ENCODE measurements at regions of chr12 and their contacts with region 1.

Region 1: GRCh38 chr12:30806989-30807694 is 52.4 kb upstream of the CAPRIN2 start:
- DNase-seq: peak; percentile 30 to 50
- H3K4me3 ChIP-seq: no peak overlapping the region
- H3K27ac ChIP-seq: no peak overlapping the region
- H3K4me1 ChIP-seq: peaks cover 13% of the 10 kb centered on the region
- H3K27me3 ChIP-seq: no peaks in the 10 kb centered on the region
- CTCF ChIP-seq: peak; percentile 85

Region 2: DNA sequence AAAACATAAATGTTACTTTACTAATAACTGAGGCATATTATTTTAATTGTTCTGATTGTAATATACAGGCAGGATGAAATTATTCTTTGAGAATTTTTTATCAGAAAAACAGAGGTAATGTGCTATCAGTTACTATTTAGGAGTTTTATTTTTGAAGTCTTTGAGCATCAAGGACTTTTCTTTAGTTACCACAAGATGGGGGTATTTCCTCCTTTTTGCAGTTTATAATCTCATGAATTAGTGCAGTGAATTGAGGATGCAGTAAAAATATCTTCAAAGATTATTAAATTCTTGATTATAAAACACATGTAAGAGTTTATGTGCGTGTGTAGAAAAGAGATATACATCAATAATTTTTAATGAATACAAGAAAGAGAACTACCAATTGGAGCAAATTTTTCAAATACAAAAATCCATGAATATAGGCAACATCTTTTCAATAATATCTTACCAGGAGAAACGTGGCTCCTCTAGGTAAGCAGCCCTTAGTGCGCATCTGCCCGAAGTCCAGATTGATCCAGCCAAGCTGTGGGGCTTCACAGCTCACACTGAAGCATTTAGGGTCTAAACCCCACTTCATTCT is 1497.7 kb before region 1 on chr12:
- CTCF ChIA-PET with region 1: no interaction called
- POLR2A ChIA-PET with region 1: no interaction called
- intact Hi-C with region 1: loop called (anchors 5 kb)
- DNase-seq: no peak
- H3K4me3 ChIP-seq: no peak overlapping the region
- H3K27ac ChIP-seq: no peak overlapping the region
- H3K4me1 ChIP-seq: no peaks in the 10 kb centered on the region
- H3K27me3 ChIP-seq: no peaks in the 10 kb centered on the region
- CTCF ChIP-seq: peak; percentile 67

Region 3: GRCh38 chr12:29365091-29365490 is 1442.1 kb before region 1 on chr12:
- CTCF ChIA-PET with region 1: no interaction called
- POLR2A ChIA-PET with region 1: interaction called, 21 read pairs
- intact Hi-C with region 1: no loop called
- DNase-seq: no peak
- H3K4me3 ChIP-seq: no peak overlapping the region
- H3K27ac ChIP-seq: no peak overlapping the region
- H3K4me1 ChIP-seq: no peaks in the 10 kb centered on the region
- H3K27me3 ChIP-seq: no peaks in the 10 kb centered on the region
- CTCF ChIP-seq: no peak

Region 4: DNA sequence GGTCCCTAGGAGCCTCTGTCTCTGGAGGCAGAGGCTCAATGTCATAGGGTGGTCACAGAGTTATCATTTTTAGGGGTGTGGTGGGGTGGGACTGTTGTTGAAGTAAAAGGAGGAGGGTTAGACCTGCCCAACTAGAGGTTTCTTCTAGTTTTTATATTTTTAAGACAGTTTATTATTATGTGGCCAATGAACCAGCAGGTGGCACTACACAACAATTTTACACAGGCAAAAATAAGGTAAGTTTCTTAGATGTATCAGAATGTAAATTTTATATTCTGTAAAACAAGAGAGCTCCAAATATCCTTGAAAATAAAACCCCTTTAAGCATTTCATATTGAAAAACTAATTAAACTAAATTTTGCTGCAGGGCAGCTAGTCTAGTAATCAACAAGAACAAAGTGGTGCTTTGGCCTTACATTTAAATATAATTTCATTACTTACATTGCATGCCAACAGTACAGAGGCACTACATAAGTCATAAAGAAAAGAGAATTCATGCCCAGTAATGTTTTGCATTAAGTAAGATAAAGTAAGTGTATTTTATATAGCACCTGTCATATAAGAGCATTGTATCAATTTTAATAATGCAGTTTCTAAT is 1287.5 kb before region 1 on chr12:
- CTCF ChIA-PET with region 1: interaction called, 6 read pairs
- POLR2A ChIA-PET with region 1: no interaction called
- intact Hi-C with region 1: loop called (anchors 1 kb)
- DNase-seq: peak in 1 of 2 experiments; percentile 24
- H3K4me3 ChIP-seq: no peak overlapping the region
- H3K27ac ChIP-seq: no peak overlapping the region
- H3K4me1 ChIP-seq: no peaks in the 10 kb centered on the region
- H3K27me3 ChIP-seq: no peaks in the 10 kb centered on the region
- CTCF ChIP-seq: peak; percentile 84

Region 5: DNA sequence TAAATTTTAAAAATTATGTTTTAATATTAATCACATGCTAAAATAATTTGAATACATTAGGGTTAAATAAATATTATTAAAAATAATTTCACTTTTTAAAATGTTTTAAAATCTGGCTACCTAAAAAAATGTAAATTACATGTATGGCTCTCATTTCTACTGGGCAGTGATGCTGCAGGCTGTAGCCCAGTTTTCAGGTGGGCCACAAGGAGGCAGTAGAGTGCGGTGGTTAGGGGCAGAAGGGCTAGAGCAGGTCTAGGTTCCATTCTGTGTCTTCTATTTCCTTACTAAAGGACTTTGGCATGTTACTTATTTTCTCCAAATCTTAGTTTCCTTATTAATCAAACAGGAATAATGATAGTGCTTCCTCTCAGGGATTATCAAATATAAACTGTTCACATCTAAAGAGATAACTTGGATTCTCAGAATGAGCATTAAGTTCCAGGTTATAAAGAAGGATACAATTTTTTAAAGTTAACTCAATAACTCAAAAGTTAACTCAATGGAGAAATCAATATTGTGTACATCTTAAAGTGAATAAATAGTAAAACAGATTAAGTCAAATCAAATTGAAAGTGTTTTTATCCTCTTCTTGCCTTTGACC is 1254.7 kb before region 1 on chr12:
- CTCF ChIA-PET with region 1: no interaction called
- POLR2A ChIA-PET with region 1: no interaction called
- intact Hi-C with region 1: loop called (anchors 5 kb)
- DNase-seq: peak; percentile 36 to 60
- H3K4me3 ChIP-seq: no peak overlapping the region
- H3K27ac ChIP-seq: no peak overlapping the region
- H3K4me1 ChIP-seq: no peaks in the 10 kb centered on the region
- H3K27me3 ChIP-seq: no peaks in the 10 kb centered on the region
- CTCF ChIP-seq: peak; percentile 92

Region 6: DNA sequence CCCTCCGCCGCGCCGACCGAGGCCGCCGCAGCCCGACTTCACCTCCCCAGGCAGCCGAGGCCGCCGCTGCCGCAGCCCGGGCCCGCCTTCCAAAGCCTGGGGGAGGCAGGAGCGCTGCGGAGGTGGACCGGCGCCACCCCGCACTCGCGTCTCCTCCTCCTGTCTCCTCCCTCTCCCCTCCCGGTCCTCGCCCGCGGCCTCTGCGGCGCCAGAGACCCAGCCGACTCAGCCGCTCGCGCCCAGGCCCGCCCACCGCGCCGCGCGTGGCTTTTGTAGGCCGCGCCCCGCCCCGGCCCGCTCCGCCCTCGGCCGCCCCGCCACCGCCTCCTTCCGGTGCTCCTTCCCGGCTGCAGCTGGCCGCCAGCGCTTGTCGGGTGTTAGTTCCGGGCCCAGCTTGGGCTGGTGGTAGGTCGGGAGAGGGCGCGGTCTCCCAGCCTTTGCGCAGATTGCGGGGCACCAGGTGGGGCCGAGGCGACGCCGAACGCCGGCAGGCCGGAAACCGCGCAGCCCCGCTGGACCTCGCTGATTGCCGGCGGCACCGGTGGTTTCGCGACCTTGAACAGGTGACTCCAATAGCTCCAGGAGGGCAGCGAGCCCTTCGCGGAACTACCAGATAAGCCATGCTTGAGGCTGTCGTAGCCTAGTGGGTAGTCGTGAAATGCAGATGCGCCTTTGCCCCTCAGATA is 52.3 kb before region 1 on chr12 and contains the start of gene CAPRIN2:
- CTCF ChIA-PET with region 1: interaction called, 7 read pairs
- POLR2A ChIA-PET with region 1: interaction called, 4 read pairs
- intact Hi-C with region 1: loop called (anchors 1 kb)
- DNase-seq: peak; percentile 86 to 100
- H3K4me3 ChIP-seq: peak within 1 kb of the TSS; percentile 74
- H3K27ac ChIP-seq: peak within 1 kb of the TSS; percentile 70
- H3K4me1 ChIP-seq: peaks cover 46% of the 10 kb centered on the region
- H3K27me3 ChIP-seq: no peaks in the 10 kb centered on the region
- CTCF ChIP-seq: peak; percentile 41; the same call in 1 of the 2 replicates
- total RNA-seq, gene CAPRIN2: 27.4 and 29.5 TPM in 2 replicates

Region 7: DNA sequence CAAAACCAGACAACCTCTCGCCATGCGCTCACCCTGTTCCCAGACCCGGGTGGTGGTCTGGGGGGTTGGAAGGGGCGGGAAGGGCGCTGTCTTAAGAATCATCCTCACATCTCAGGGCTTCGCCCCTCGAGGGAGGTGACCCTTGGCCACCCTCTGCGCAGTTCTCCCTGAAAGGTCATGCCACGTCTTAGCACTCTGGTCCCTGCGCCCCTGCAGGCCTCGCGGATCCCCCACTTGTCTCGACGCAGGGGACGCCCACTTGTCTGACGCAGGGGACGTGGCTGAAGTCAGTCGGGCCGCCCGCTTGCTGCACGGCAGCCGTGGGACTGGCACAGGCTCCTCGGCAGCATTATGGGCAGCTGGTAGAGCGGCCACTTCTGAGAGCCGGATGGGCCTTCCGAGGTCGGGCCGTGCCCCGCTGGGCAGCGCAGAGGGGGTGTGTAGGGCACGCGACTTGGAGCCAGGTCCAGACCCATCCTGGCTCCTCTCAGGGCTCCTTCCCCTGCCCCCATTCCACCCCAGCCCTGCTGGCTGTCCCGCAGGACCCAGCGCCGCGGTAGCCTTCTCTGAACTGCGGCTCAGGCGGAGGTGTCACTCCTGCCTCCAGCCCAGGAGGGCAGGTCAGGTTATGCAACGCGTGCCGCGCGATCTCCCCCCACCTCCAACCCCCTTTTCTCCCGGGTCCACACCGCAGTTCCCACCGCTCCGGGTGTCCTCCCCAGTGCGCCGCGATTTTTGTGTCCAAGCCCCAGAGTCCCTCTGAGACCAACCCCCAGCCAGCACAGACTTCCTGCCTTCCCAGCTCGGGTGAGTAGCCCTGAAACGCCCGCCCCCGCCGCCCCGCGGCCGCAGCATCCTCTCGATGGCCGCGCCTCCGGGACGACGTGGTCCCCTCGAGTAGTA is 11.5 kb before region 1 on chr12:
- CTCF ChIA-PET with region 1: interaction called, 11 read pairs
- POLR2A ChIA-PET with region 1: interaction called, 11 read pairs
- intact Hi-C with region 1: no loop called
- DNase-seq: peak; percentile 67 to 78
- H3K4me3 ChIP-seq: peak overlapping the region; percentile 82
- H3K27ac ChIP-seq: peak overlapping the region; percentile 94
- H3K4me1 ChIP-seq: peaks cover 55% of the 10 kb centered on the region
- H3K27me3 ChIP-seq: no peaks in the 10 kb centered on the region
- CTCF ChIP-seq: no peak